HCT116 (cell line): ENCODE measurements at regions of chr22 and their contacts with region 1.

Region 1: GRCh38 chr22:37472418-37473006 is 13.7 kb downstream of the MFNG start:
- DNase-seq: no peak
- ATAC-seq: peak; percentile 85
- H3K4me3 ChIP-seq: no peak overlapping the region
- H3K27ac ChIP-seq: no peak overlapping the region
- H3K4me1 ChIP-seq: peaks cover 6 to 37% of the 10 kb centered on the region in 2 experiments
- H3K27me3 ChIP-seq: no peaks in the 10 kb centered on the region
- CTCF ChIP-seq: peak; percentile 70 to 91 (median 90)
- POLR2A ChIP-seq: no peak
- RAD21 ChIP-seq: peak; percentile 78

Region 2: DNA sequence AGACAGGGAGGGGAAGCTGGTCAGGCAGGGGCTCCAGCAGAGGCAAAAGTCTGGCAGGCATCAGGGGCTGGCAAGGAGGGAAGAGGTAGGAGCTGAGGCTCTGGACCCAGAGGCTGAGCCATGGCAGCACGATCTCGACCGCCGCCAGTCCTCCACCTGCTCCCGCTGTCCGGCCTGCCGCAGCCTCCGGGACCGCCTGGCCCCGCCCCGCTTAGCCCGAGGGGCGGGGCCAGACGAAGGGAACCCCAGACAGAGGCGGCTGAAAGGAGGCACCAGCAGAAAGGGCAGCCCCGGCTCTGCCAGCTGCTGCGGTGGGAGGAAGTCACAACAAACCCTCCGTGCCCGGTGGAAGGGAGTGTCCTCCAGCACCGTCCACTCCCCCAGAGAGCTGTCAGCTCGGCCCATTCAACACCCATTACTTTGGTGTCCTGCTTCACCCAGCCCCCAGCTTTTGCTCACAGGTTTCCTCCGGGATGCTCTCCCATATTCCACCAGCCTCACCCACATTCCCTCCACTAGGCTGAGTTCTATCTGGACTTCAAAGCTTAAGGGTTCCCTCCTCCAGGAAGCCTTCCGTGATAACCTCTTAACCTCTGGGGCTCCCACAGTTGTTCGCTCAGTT is 13.8 kb after region 1 on chr22 and contains the start of gene MFNG:
- CTCF ChIA-PET with region 1: interaction called, 12 read pairs
- POLR2A ChIA-PET with region 1: no interaction called
- RAD21 ChIA-PET with region 1: no interaction called
- intact Hi-C with region 1: no loop called
- DNase-seq: no peak
- ATAC-seq: peak; percentile 93
- H3K4me3 ChIP-seq: peak within 1 kb of the TSS in 1 of 2 experiments; percentile 27; a peak in 1 of 4 replicates
- H3K27ac ChIP-seq: peak within 1 kb of the TSS; percentile 8; the same call in 1 of the 2 replicates
- H3K4me1 ChIP-seq: peaks cover 19 to 33% of the 10 kb centered on the region in 2 experiments
- H3K27me3 ChIP-seq: no peaks in the 10 kb centered on the region
- CTCF ChIP-seq: peak in 1 of 3 experiments; percentile 12; a peak in 1 of 6 replicates
- POLR2A ChIP-seq: no peak
- RAD21 ChIP-seq: no peak
- total RNA-seq, gene MFNG: 4.5 TPM

Region 3: GRCh38 chr22:37525073-37525748 is 52.7 kb after region 1 on chr22:
- CTCF ChIA-PET with region 1: interaction called, 10 read pairs
- POLR2A ChIA-PET with region 1: no interaction called
- RAD21 ChIA-PET with region 1: no interaction called
- intact Hi-C with region 1: no loop called
- DNase-seq: peak; percentile 60
- ATAC-seq: peak; percentile 94
- H3K4me3 ChIP-seq: peak overlapping the region; percentile 6 to 51; a peak in 2 of 4 replicates
- H3K27ac ChIP-seq: peak overlapping the region; percentile 82
- H3K4me1 ChIP-seq: peaks cover 19 to 67% of the 10 kb centered on the region in 2 experiments
- H3K27me3 ChIP-seq: no peaks in the 10 kb centered on the region
- CTCF ChIP-seq: no peak
- POLR2A ChIP-seq: no peak
- RAD21 ChIP-seq: no peak

Region 4: GRCh38 chr22:37566903-37567820 is 94.7 kb after region 1 on chr22:
- CTCF ChIA-PET with region 1: interaction called, 23 read pairs
- POLR2A ChIA-PET with region 1: interaction called, 3 read pairs
- RAD21 ChIA-PET with region 1: no interaction called
- intact Hi-C with region 1: no loop called
- DNase-seq: peak; percentile 84
- ATAC-seq: peak; percentile 62
- H3K4me3 ChIP-seq: no peak overlapping the region
- H3K27ac ChIP-seq: peak overlapping the region; percentile 72
- H3K4me1 ChIP-seq: peaks cover 76 to 98% of the 10 kb centered on the region in 2 experiments
- H3K27me3 ChIP-seq: no peaks in the 10 kb centered on the region
- CTCF ChIP-seq: peak in 2 of 3 experiments; percentile 94 to 97; a peak in 4 of 6 replicates
- POLR2A ChIP-seq: no peak
- RAD21 ChIP-seq: no peak